B cell (primary cell): ENCODE measurements at regions of chr1 and their contacts with region 1.

Region 1: DNA sequence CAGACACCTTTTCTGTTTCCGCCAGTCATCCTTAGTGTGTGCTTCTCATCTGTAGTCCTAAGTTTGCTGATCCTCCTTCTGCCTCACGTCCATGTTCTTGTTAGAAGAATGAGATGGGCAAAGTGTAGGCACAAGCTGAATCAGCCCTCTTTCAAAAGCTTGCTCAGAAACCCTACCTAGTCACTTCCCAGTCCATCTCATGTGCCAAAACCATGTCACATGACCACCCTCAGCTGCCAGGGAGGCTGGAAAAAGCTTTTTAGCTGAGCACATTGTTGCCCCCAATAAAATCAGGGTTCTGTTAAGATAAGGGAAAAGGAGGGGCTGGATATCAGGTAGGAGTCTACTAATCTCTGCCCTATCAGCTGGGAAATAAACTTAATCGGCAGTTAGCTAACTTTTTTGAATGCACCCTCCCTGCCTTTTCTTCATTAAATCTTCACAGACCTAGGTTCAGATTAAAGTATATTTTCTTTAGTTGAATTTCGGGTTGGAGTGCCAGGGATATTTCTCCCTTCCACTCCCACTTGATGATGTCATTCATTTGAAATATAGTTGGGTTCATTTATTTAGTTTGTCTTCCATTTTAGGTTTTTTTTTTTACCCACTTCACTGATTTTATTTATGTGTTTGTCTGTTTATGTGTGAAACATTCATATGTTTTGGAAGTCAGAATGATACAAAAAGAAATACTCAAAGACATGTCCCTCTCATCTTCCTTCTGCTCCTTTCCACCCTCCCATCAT is 129.2 kb downstream of the ROR1 start:
- DNase-seq: no peak
- ATAC-seq: no peak
- H3K4me3 ChIP-seq: no peak overlapping the region
- H3K4me3 Mint-ChIP-seq: no peak overlapping the region
- H3K27ac ChIP-seq: no peak overlapping the region
- H3K27ac Mint-ChIP-seq: no peak overlapping the region
- H3K4me1 ChIP-seq: peaks cover 7 to 9% of the 10 kb centered on the region in 2 donors
- H3K4me1 Mint-ChIP-seq: peaks cover 11% of the 10 kb centered on the region
- H3K27me3 ChIP-seq: peaks cover 0 to 15% (median 2%) of the 10 kb centered on the region in 4 experiments
- H3K27me3 Mint-ChIP-seq: peaks cover 33% of the 10 kb centered on the region
- CTCF ChIP-seq: no peak

Region 2: DNA sequence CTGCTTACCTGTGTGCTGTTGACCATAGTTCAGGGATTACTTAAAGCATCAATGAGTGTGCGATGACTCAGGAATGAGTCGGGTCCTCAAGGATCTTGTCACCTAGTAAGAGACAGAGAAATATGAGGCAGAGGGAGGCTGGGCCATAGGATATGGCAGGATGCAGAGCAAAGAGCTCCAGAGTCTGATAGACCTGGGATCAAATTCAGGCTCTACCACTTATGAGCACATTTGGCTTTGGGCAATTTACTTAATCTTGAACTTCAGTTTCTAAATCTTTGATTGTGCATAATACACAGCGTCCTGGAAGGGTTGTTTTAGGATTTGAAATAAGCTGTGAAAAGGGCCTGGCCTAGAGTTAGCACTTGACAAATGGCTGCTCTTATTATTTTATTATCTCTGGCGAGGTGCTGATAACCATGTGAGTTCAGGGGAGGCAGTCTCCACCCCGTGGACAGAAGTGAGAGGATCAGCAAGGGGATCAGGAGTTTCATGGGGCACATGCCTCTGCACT is 34.7 kb before region 1 on chr1:
- CTCF ChIA-PET with region 1: no interaction called
- POLR2A ChIA-PET with region 1: no interaction called
- intact Hi-C with region 1: loop called (anchors 5 kb)
- DNase-seq: no peak
- ATAC-seq: no peak
- H3K4me3 ChIP-seq: no peak overlapping the region
- H3K4me3 Mint-ChIP-seq: no peak overlapping the region
- H3K27ac ChIP-seq: no peak overlapping the region
- H3K27ac Mint-ChIP-seq: no peak overlapping the region
- H3K4me1 ChIP-seq: no peaks in the 10 kb centered on the region
- H3K4me1 Mint-ChIP-seq: no peaks in the 10 kb centered on the region
- H3K27me3 ChIP-seq: no peaks in the 10 kb centered on the region
- H3K27me3 Mint-ChIP-seq: peaks cover 3% of the 10 kb centered on the region
- CTCF ChIP-seq: no peak